ENCODE measurements at regions of chr14 and their contacts with region 1.

Region 1: DNA sequence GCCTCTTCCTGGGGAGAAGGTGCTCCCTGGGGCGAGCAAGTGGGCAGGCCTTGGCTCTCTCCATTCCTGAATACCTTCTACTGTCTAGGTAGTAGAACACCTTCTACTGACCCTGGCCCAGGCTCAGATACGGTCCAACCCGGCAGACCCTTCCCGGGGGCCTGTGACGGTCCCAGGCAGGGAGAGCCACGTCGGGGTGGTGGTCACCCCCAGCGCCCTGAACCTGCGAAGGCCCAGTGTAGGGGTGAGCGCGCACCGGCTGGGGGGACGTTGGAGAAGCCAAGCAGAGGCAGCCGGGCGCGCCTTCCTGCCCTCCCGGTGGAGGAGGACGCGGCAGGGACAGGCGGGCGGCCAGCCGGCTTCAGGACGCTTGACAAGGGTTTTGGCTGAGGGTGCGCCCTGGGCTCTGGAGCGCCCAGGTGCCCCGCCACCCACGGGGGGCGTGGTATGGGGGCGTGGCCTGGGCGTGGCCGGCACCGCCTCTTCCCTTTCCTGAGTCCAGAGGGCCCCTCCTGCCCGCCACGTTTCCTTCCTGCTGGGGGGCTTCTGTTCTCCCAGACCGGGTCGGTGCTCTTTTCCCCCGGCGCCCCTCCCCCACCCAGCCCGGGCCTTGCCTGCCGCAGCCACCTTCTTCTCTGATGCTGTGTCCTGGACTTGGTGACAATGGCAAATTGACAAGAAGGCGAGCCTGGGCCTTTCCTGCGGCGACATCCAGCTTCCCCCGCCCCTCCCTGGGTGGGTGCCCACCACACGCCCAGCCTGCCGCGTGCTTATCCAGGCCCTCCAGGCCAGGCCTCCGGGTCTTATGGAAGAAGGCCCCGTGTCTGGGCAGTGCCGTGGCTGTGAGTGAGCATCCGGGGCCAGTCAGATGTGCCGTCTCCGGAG is 24.5 kb upstream of the PPP1R13B start:
- DNase-seq: peak; percentile 83
- ATAC-seq: peak; percentile 95
- H3K4me3 Mint-ChIP-seq: peak overlapping the region; percentile 86
- H3K27ac Mint-ChIP-seq: peak overlapping the region; percentile 63
- H3K4me1 Mint-ChIP-seq: peaks cover 9% of the 10 kb centered on the region
- H3K27me3 Mint-ChIP-seq: peaks cover 2% of the 10 kb centered on the region
- CTCF ChIP-seq: no peak

Region 2: DNA sequence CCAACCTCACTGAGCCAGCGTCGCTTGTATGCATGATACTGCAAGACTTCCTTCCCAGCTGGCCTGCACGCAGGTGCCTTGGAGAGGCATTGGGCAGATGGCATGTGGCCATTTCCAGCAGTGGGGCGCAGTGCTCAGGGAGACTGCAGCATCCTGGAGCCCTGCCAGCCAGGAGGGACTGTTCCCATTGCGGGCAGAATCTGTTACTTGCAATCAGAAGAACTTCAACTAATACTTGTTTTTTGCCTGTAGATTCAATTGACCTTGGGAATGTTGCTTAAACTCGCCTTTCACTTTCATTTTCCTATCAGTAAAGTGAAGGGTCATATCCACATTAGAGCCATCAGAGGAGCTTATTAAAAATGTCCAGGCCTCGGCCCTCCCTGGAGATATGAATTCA is 1392.1 kb before region 1 on chr14:
- CTCF ChIA-PET with region 1: no interaction called
- POLR2A ChIA-PET with region 1: no interaction called
- intact Hi-C with region 1: no loop called
- DNase-seq: no peak
- ATAC-seq: no peak
- H3K4me3 Mint-ChIP-seq: no peak overlapping the region
- H3K27ac Mint-ChIP-seq: no peak overlapping the region
- H3K4me1 Mint-ChIP-seq: no peaks in the 10 kb centered on the region
- H3K27me3 Mint-ChIP-seq: no peaks in the 10 kb centered on the region
- CTCF ChIP-seq: no peak

Region 3: DNA sequence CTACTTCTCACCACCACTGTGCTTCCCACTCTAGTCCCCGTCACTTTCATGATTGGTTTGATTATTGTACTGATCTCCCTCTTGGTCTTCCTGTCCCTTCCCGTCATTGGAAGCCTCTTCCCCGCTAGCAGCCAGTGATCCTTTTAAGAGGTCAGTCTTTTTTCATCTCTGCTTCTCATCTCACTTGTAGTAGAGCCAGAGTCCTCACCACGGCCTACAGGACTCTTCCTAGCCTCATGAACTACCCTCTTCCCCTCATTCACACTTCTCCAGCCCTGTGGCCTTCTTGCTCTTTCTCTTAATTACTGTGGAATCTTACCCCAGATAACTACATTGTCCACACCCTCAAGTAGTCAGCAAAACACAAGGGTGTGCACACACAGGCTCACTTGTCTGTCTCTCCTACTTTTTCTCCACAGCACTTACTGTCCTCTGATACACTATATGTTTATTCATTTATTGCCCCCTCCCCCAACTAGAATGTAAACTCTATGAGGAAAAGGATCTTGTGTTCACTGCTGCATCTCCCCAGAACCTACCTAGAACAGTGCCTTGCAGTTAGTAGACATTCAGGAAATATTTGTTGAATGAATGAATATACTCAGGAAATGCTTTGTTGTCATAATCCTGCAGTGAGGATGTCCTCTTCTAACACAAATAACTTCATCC is 415.5 kb before region 1 on chr14:
- CTCF ChIA-PET with region 1: no interaction called
- POLR2A ChIA-PET with region 1: no interaction called
- intact Hi-C with region 1: no loop called
- DNase-seq: no peak
- ATAC-seq: no peak
- H3K4me3 Mint-ChIP-seq: no peak overlapping the region
- H3K27ac Mint-ChIP-seq: no peak overlapping the region
- H3K4me1 Mint-ChIP-seq: no peaks in the 10 kb centered on the region
- H3K27me3 Mint-ChIP-seq: no peaks in the 10 kb centered on the region
- CTCF ChIP-seq: no peak

Region 4: GRCh38 chr14:103920981-103921854 is 49.4 kb after region 1 on chr14:
- CTCF ChIA-PET with region 1: no interaction called
- POLR2A ChIA-PET with region 1: no interaction called
- intact Hi-C with region 1: loop called (anchors 2 kb)
- DNase-seq: peak; percentile 99
- ATAC-seq: peak; percentile 100
- H3K4me3 Mint-ChIP-seq: peak overlapping the region; percentile 91
- H3K27ac Mint-ChIP-seq: peak overlapping the region; percentile 66
- H3K4me1 Mint-ChIP-seq: peaks cover 15% of the 10 kb centered on the region
- H3K27me3 Mint-ChIP-seq: no peaks in the 10 kb centered on the region
- CTCF ChIP-seq: peak; percentile 96

Measured in activated B cell treated with CpG ODN at 0.5 μM for 24 hours (primary cell).